ENCODE measurements at regions of chr1 and their contacts with region 1.

Region 1: GRCh38 chr1:208238710-208239472 is 5.3 kb downstream of the PLXNA2 start:
- DNase-seq: peak; percentile 52
- H3K4me3 Mint-ChIP-seq: no peak overlapping the region
- H3K27ac Mint-ChIP-seq: no peak overlapping the region
- H3K4me1 Mint-ChIP-seq: peaks cover 24% of the 10 kb centered on the region
- H3K27me3 Mint-ChIP-seq: no peaks in the 10 kb centered on the region
- CTCF ChIP-seq: peak; percentile 85

Region 2: DNA sequence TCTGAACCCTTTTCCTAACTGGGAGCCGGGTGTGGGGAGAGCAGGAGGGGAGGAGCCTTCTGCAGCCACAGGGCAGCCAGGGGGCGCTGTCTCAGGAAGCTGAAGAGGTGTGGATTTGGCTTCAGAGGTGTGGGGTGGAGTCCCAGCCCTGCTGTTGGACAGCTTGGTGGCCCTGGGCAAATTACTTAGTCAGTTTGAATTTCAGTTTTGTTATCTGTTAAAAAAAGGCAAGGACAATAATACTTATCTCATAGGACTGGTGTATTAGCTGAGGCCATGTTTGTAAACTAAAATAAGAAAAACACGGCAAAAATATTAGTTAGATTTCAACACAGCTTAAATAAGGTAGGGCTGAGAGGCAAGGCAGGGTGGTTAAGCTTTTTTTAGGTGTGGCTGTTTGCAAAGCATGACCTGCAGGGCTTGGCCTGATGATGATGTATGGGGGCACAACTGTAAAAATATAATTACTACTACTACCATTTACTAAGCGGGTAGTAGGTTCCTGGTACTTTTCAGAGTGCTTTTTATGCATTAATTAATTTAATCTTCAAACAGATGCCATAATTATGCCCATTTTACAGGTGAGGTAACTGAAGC is 106.5 kb before region 1 on chr1:
- CTCF ChIA-PET with region 1: interaction called, 67 read pairs
- intact Hi-C with region 1: loop called (anchors 1 kb)
- DNase-seq: peak; percentile 97
- H3K4me3 Mint-ChIP-seq: peak overlapping the region; percentile 37
- H3K27ac Mint-ChIP-seq: no peak overlapping the region
- H3K4me1 Mint-ChIP-seq: peaks cover 21% of the 10 kb centered on the region
- H3K27me3 Mint-ChIP-seq: no peaks in the 10 kb centered on the region
- CTCF ChIP-seq: peak; percentile 87

Region 3: GRCh38 chr1:208177656-208178055 is 61.2 kb before region 1 on chr1:
- CTCF ChIA-PET with region 1: interaction called, 3 read pairs
- intact Hi-C with region 1: loop called (anchors 2 kb)
- DNase-seq: no peak
- H3K4me3 Mint-ChIP-seq: no peak overlapping the region
- H3K27ac Mint-ChIP-seq: no peak overlapping the region
- H3K4me1 Mint-ChIP-seq: peaks cover 35% of the 10 kb centered on the region
- H3K27me3 Mint-ChIP-seq: no peaks in the 10 kb centered on the region
- CTCF ChIP-seq: no peak

Region 4: GRCh38 chr1:208203127-208203847 is 35.6 kb before region 1 on chr1:
- CTCF ChIA-PET with region 1: interaction called, 24 read pairs
- intact Hi-C with region 1: loop called (anchors 2 kb)
- DNase-seq: peak; percentile 77
- H3K4me3 Mint-ChIP-seq: peak overlapping the region; percentile 42
- H3K27ac Mint-ChIP-seq: peak overlapping the region; percentile 62
- H3K4me1 Mint-ChIP-seq: peaks cover 27% of the 10 kb centered on the region
- H3K27me3 Mint-ChIP-seq: no peaks in the 10 kb centered on the region
- CTCF ChIP-seq: no peak

Region 5: DNA sequence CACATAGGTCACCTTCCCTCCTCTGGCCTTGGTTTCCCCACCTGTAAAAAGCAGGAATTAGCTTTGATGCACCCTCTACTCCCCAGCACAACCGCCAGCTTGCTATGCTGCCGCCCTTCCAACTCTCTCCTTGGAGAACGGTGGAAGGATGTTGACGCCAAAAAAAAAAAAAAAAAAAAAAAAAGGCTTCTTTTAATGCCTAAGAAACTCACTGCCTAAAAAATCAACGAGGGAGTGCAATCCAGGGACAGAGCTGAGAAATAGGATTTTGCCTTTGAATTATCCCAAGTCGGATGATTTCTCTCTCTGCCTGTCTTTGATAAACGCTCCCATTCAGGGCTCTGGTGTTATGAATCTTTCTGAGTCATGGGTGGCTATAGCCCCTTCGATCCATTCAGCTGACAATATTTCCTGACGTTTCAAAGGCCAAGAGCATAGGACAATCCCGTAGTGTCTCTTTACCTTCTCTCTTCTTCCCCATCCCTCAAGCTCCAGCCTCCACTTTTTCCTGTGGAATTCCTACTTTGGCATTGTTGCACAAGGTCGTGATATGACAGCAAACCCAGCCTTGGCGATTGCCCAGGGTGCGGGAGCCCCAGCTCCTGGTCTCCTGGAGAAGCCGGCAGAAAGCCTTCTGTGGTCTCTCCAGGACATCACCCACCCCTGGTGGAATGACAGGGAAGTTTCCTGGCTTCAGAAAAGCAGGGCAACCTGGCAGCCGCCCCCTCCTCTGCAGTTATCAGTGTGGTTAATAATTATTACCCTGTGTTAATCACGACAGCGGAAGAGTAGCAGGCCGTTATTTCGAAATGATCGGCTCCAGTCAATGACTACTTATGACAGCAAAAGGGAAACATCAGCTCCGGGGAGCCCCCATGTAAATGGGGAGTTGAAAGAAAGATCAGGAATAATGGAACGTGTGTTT is 13.3 kb after region 1 on chr1:
- CTCF ChIA-PET with region 1: interaction called, 11 read pairs
- intact Hi-C with region 1: no loop called
- DNase-seq: peak; percentile 91
- H3K4me3 Mint-ChIP-seq: peak overlapping the region; percentile 57
- H3K27ac Mint-ChIP-seq: no peak overlapping the region
- H3K4me1 Mint-ChIP-seq: peaks cover 19% of the 10 kb centered on the region
- H3K27me3 Mint-ChIP-seq: peaks cover 80% of the 10 kb centered on the region
- CTCF ChIP-seq: peak; percentile 87

Region 6: GRCh38 chr1:208868554-208868953 is 629.7 kb after region 1 on chr1:
- CTCF ChIA-PET with region 1: no interaction called
- intact Hi-C with region 1: no loop called
- DNase-seq: no peak
- H3K4me3 Mint-ChIP-seq: no peak overlapping the region
- H3K27ac Mint-ChIP-seq: no peak overlapping the region
- H3K4me1 Mint-ChIP-seq: no peaks in the 10 kb centered on the region
- H3K27me3 Mint-ChIP-seq: no peaks in the 10 kb centered on the region
- CTCF ChIP-seq: no peak